HCT116 (cell line): ENCODE measurements at regions of chr11 and their contacts with region 1.

Region 1: GRCh38 chr11:65779851-65780577 is 762 bp downstream of the AP5B1 start:
- DNase-seq: peak; percentile 64
- ATAC-seq: peak; percentile 76
- H3K4me3 ChIP-seq: peak overlapping the region; percentile 88 to 91
- H3K27ac ChIP-seq: peak overlapping the region; percentile 98
- H3K4me1 ChIP-seq: peaks cover 12 to 38% of the 10 kb centered on the region in 2 experiments; a peak in 3 of 4 replicates
- H3K27me3 ChIP-seq: no peaks in the 10 kb centered on the region
- CTCF ChIP-seq: peak in 2 of 3 experiments; percentile 97 to 99; a peak in 4 of 6 replicates
- POLR2A ChIP-seq: no peak
- RAD21 ChIP-seq: no peak

Region 2: DNA sequence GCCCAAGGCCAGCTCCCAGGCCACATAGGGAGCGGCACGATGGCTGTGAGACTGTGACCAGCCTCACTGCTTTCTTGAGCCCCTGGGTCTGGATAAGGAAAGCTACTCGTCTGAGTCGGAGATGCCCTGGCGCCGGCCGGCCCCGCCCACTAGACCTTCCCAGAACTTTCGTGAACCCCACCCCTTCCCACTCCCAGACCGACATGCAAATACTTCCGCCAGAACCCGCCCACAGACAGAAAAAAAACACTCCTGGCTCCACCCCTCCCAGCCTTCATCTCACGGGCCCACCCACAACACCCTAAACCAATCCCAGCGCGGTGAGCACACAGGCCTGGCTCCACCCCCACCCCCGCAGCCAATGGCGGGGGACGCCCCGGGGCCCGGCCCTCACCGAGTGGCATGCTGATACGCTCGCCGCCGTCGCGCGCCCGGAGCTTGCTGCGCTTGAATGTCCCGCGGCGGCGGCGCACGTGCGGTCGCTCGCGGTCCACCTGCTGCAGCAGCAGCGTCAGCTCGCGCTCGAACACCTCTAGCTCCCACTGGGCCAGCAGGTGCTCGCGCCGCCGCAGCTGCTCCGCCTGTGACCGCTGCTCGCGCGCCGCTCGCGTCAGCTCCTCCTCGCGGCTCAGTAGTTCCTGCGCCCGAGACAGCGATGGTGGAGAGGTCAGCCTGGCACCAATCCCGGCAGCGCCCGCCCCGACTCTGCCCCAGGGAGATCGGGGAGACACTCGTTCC is 173.0 kb before region 1 on chr11:
- CTCF ChIA-PET with region 1: no interaction called
- POLR2A ChIA-PET with region 1: no interaction called
- RAD21 ChIA-PET with region 1: no interaction called
- intact Hi-C with region 1: no loop called
- DNase-seq: peak; percentile 89
- ATAC-seq: peak; percentile 98
- H3K4me3 ChIP-seq: peak overlapping the region; percentile 7 to 35; a peak in 3 of 4 replicates
- H3K27ac ChIP-seq: peak overlapping the region; percentile 67
- H3K4me1 ChIP-seq: peaks cover 8 to 44% of the 10 kb centered on the region in 2 experiments; a peak in 3 of 4 replicates
- H3K27me3 ChIP-seq: no peaks in the 10 kb centered on the region
- CTCF ChIP-seq: no peak
- POLR2A ChIP-seq: no peak
- RAD21 ChIP-seq: no peak

Region 3: DNA sequence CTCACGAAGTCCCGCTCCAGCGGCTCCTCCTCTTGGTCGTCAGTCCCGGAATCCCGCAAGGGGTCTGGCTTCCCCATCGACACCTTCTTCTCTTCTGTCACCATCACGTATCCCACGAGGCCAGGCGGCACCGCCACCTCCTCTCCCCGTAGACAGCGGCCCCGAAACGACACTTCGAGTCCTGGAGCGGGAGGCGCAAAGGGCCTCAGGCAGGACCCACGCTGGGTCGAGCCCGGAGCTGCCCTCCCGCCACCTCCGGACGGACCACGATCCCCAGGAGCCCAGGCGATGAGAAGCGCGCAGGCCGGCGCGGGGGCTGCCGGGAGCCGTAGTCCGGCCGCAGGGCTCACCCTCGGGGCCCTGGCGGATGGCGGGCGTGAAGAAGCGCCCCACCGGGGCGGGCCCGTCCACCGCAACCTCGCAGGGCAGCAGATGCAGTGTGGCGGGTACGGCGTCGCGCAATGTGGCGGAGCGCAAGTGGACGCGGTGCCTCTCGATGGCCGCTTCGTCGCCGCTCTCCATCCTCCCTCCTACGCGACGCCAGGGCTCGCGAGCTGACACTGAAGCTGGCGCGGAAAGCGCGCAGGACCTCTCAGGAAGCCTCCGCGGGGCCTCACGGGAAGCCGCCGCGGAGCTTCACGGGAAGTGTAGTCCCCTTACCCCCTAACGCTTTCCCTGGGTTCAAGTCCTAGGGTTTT is 59.6 kb before region 1 on chr11 and contains the start of gene RNASEH2C:
- CTCF ChIA-PET with region 1: interaction called, 21 read pairs
- POLR2A ChIA-PET with region 1: interaction called, 3 read pairs
- RAD21 ChIA-PET with region 1: no interaction called
- intact Hi-C with region 1: no loop called
- DNase-seq: peak; percentile 77
- ATAC-seq: peak; percentile 91
- H3K4me3 ChIP-seq: peak within 1 kb of the TSS; percentile 83 to 93
- H3K27ac ChIP-seq: peak within 1 kb of the TSS; percentile 82
- H3K4me1 ChIP-seq: peaks cover 5 to 10% of the 10 kb centered on the region in 2 experiments; a peak in 3 of 4 replicates
- H3K27me3 ChIP-seq: no peaks in the 10 kb centered on the region
- CTCF ChIP-seq: no peak
- POLR2A ChIP-seq: peak; percentile 88
- RAD21 ChIP-seq: no peak
- total RNA-seq, gene RNASEH2C: 28.5 TPM

Region 4: DNA sequence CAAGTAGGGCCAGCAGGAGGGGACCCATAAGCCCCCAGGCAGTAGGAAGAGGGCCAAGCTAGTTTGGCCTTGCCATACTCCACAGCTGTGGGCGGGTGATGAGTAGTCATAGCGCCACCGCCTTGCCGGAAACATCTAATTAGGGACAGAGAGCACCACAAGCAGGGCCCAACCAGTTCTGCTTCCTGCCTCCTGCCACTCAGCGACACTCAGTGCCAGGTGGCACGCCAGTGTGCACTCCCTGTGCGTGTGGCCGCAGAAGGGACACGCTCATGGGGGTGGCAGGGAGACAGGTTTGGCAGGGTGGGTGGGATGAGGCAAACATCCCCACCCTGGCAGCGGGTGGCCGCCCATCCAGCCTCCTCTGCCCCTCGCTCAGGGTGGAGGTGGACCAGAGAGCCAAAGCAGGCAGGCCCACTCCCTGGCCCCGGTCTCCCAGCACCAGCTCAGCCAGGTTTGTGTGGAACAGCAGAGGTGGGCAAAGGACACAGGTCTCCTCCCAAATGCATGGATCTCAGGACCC is 11.7 kb after region 1 on chr11:
- CTCF ChIA-PET with region 1: interaction called, 73 read pairs
- POLR2A ChIA-PET with region 1: interaction called, 3 read pairs
- RAD21 ChIA-PET with region 1: no interaction called
- intact Hi-C with region 1: no loop called
- DNase-seq: no peak
- ATAC-seq: peak; percentile 71
- H3K4me3 ChIP-seq: peak overlapping the region; percentile 24 to 54
- H3K27ac ChIP-seq: peak overlapping the region; percentile 94
- H3K4me1 ChIP-seq: peaks cover 54 to 67% of the 10 kb centered on the region in 2 experiments
- H3K27me3 ChIP-seq: no peaks in the 10 kb centered on the region
- CTCF ChIP-seq: no peak
- POLR2A ChIP-seq: no peak
- RAD21 ChIP-seq: no peak

Region 5: GRCh38 chr11:65796726-65797601 is 16.9 kb after region 1 on chr11:
- CTCF ChIA-PET with region 1: interaction called, 73 read pairs
- POLR2A ChIA-PET with region 1: interaction called, 3 read pairs
- RAD21 ChIA-PET with region 1: no interaction called
- intact Hi-C with region 1: no loop called
- DNase-seq: no peak
- ATAC-seq: no peak
- H3K4me3 ChIP-seq: no peak overlapping the region
- H3K27ac ChIP-seq: no peak overlapping the region
- H3K4me1 ChIP-seq: peaks cover 20 to 25% of the 10 kb centered on the region in 2 experiments
- H3K27me3 ChIP-seq: no peaks in the 10 kb centered on the region
- CTCF ChIP-seq: no peak
- POLR2A ChIP-seq: no peak
- RAD21 ChIP-seq: no peak

Region 6: DNA sequence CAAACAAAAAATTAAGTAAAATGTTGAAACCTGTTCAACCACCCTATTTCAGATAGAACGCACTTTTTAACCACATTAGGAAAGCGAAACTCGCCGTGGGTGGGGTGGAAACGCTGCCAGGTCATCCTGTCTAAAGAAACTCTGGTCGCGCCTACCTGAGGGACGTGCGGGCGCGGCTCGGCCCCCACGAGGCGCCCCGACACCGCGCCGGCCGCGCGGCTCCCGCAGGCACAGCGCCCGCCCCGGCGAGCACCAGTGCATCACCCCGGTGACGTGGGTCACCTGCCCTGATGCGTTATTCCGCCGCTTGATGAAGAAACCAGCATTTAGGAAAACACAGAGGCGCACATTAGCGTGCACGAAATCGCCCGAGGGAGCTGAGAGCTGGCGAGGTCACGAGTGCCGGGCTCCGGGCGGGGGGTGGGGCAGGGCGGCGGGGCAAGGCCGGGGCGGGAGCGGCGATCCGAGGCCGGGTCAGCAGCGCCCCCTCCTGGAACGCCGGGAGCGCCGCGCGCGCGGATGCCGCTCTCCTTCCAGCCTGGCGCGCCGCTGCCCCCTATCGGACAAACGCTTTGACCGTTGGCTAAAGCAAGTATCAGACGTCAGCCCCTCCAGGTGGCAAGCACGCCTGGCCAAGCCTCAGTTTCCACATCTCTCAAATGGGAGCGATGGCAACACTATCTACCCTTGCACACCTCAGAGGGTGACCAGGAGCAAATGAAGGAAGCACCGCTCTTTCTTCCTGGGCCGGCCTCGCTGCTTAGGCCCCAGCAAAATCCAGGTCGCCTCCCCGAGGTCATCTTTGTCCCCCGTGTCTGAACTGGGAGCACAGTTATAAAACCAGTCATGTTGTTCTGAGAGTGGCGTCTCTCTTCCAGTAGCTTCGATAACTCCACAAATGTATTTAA is 38.1 kb after region 1 on chr11:
- CTCF ChIA-PET with region 1: interaction called, 36 read pairs
- POLR2A ChIA-PET with region 1: interaction called, 7 read pairs
- RAD21 ChIA-PET with region 1: interaction called, 5 to 7 read pairs
- intact Hi-C with region 1: loop called (anchors 1 kb)
- DNase-seq: peak; percentile 76
- ATAC-seq: peak; percentile 94
- H3K4me3 ChIP-seq: peak overlapping the region; percentile 51 to 65
- H3K27ac ChIP-seq: peak overlapping the region; percentile 51; the same call in 1 of the 2 replicates
- H3K4me1 ChIP-seq: peaks cover 0 to 12% of the 10 kb centered on the region in 2 experiments; a peak in 2 of 4 replicates
- H3K27me3 ChIP-seq: no peaks in the 10 kb centered on the region
- CTCF ChIP-seq: peak; percentile 88 to 99 (median 97)
- POLR2A ChIP-seq: no peak
- RAD21 ChIP-seq: peak; percentile 96

Region 7: DNA sequence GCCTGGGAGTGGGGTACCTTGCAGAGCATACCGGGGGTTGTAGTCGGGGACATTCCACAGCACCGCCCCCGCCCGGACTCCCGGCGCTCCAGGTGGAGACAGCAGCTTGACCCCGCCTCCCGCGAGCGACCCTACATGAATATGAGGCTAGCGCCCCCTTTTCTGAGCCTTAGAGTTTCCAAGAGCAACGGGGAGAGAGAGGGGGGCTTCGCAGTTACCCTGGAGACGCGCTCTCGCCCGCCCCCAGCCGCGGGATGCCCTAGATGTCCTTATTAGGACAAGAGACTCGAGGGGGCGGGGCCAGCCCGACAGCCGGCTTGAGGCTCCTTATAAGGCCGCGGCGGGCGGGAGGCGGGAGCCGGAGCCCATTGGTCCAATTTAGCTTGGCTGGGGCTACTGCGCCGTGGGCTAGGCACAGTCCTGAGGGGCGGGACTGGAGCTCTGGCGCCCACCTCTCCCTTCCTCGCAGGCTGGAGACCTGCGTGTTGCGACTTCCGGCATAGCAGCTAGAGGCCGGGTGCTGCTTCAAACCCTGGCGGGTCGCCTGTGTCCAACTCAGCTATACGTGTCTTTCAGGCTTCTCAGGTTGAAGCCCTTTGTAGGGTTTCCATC is 79.3 kb after region 1 on chr11:
- CTCF ChIA-PET with region 1: interaction called, 16 read pairs
- POLR2A ChIA-PET with region 1: interaction called, 4 read pairs
- RAD21 ChIA-PET with region 1: no interaction called
- intact Hi-C with region 1: no loop called
- DNase-seq: peak; percentile 95
- ATAC-seq: peak; percentile 66
- H3K4me3 ChIP-seq: peak overlapping the region; percentile 85 to 100
- H3K27ac ChIP-seq: peak overlapping the region; percentile 97
- H3K4me1 ChIP-seq: peaks cover 23 to 44% of the 10 kb centered on the region in 2 experiments
- H3K27me3 ChIP-seq: no peaks in the 10 kb centered on the region
- CTCF ChIP-seq: no peak
- POLR2A ChIP-seq: peak; percentile 78
- RAD21 ChIP-seq: no peak

Region 8: DNA sequence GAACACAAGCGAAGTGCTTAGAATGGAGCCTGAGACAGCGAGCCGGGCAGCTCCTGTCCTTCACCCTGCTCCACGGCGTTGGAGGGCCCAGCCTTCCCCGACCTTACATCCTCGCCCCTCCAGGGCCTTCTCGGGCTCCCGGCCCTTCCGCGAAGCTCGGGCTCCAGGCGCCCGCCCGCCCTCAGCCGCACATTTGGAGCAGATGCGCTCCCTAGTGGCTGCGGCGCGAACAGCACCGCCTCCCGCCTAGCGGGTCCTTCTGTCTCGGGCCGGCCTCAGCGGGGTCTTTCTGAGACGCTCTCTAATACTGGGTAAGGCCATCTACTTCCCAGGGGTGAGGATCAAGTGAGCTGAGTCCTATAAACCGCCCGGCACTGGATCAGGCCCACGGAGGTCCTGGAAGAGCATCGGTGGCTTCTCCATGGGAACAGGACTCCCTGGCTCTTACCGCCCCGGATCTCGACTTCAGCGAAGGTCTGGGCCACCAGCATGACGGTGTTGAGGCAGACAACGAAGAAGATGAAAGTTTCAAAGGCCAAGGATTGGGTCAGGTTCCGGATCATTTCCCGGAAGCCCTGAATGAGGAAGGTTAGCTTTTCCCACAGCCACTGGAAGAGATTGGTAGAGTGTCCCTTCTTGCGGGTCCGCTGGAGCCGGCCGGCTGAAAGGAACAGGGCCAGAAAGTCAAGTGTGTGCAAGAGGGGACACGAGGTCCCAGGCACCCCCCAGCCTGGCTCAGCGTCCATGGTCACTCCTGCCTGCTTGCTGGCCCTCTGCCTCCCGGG is 242.6 kb after region 1 on chr11:
- CTCF ChIA-PET with region 1: no interaction called
- POLR2A ChIA-PET with region 1: no interaction called
- RAD21 ChIA-PET with region 1: interaction called in 1 of 2 experiments, 11 read pairs
- intact Hi-C with region 1: no loop called
- DNase-seq: no peak
- ATAC-seq: peak; percentile 81
- H3K4me3 ChIP-seq: 0 out of 4 replicates have a peak overlapping the region, but pooled peaks of 1 of the 2 experiments have one; percentile 13
- H3K27ac ChIP-seq: no peak overlapping the region; the same call in 1 of the 2 replicates
- H3K4me1 ChIP-seq: peaks cover 14 to 47% of the 10 kb centered on the region in 2 experiments
- H3K27me3 ChIP-seq: no peaks in the 10 kb centered on the region
- CTCF ChIP-seq: peak in 2 of 3 experiments; percentile 90 to 91; a peak in 4 of 6 replicates
- POLR2A ChIP-seq: no peak
- RAD21 ChIP-seq: no peak